GM10248 (cell line): ENCODE measurements at regions of chr9 and their contacts with region 1.

Region 1: DNA sequence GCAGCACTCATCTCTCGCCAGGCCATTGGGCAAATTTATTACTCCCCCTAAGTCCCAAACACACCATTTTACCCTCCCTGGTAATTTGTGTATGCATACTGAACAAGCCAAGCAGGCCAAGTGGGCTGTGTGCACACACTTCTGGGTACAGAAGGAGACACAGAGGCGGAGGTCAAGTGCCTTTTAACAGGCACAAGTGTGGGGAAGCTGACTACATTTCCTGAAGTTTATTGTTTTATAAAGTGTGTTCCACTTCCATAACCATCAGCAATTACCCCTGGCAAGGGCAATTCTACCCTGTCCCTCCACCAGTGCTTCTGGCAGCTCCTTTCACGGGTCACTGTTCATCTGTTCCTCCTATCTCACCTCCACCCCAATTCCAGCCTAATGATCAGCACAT is 93.9 kb downstream of the SETX start:
- DNase-seq: no peak
- CTCF ChIP-seq: no peak

Region 2: GRCh38 chr9:131755541-131756198 is 505.2 kb before region 1 on chr9:
- CTCF ChIA-PET with region 1: interaction called, 149 read pairs
- POLR2A ChIA-PET with region 1: no interaction called
- DNase-seq: peak; percentile 82
- CTCF ChIP-seq: peak; percentile 93

Region 3: GRCh38 chr9:131969469-131969989 is 291.3 kb before region 1 on chr9:
- CTCF ChIA-PET with region 1: no interaction called
- POLR2A ChIA-PET with region 1: no interaction called
- DNase-seq: no peak
- CTCF ChIP-seq: no peak

Region 4: DNA sequence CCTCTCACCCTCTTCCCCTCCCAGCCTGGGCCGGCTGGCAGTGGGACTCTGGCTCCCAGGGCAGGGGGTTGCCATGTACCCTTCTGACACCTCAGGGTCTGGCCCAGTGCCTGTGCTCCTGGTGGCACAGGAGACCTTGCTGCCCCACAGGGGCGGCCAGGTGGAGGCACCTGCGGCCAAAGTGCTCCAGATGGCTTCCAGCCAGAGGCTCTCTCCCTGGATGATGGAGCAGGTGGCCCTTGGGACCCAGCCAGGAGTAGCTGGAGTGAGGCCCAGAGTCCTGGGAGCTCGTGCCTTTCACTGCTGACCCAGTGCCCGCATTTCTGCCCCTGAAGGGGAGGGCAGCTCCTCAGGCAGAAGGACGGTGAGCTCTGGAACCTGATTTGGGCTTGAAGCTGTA is 11.7 kb before region 1 on chr9:
- CTCF ChIA-PET with region 1: interaction called, 37 read pairs
- POLR2A ChIA-PET with region 1: no interaction called
- DNase-seq: no peak
- CTCF ChIP-seq: no peak

Region 5: DNA sequence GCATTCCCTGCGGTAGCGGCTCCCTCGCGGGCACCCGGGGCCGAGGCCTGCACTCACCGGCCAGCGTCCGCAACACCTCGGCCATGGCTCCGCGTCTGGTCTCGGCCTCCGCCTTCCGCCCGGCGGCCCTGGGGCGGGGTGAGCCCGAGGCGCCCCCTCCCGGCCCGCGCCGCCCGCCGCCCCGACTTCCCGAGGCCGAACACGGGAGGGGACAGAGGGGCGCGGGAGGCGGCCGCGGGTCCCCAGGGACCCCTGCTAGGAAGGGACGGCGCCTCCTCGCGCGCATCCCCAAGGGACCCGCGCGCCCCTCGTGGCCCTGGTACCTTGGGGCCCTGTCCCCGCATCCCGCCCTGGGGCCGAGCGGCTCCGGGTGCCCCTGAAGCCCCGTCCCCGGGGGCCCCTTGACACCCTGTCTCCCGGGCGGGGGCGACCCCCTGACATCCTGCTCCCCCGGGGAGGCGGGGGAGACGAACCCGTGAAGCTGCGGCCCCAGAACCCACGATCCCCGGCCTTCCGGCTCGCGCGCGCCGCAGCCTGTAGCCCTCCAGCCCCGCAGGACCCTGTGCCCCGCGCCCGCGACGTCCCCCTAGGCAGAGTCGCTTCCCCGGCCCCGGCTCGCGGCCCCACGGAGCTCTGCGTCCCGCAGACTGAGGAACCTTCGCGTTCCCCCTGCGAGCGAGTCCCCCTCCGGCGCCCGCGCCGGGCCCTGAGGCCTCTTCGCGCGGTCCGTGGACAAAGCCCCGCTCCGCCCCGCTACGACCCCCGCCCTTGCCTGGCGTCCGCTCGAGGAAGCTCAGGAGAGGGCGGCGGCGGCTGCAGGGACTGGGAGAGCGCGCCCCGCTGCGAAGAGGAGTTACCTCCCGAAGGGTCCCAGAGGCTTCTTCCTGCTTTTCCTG is 1014.5 kb after region 1 on chr9 and contains the start of gene ABO:
- CTCF ChIA-PET with region 1: no interaction called
- POLR2A ChIA-PET with region 1: no interaction called
- DNase-seq: peak; percentile 22
- CTCF ChIP-seq: no peak